Common myeloid progenitor, CD34-positive (primary cell): ENCODE measurements at regions of chr4 and their contacts with region 1.

Region 1: GRCh38 chr4:74228691-74229640 is 71.0 kb downstream of the MTHFD2L start:
- DNase-seq: peak; percentile 87 to 91 (median 88)
- H3K4me3 ChIP-seq: no peak overlapping the region
- H3K27ac ChIP-seq: no peak overlapping the region
- H3K4me1 ChIP-seq: peaks cover 0 to 22% (median 15%) of the 10 kb centered on the region in 4 experiments
- H3K27me3 ChIP-seq: no peaks in the 10 kb centered on the region

Region 2: DNA sequence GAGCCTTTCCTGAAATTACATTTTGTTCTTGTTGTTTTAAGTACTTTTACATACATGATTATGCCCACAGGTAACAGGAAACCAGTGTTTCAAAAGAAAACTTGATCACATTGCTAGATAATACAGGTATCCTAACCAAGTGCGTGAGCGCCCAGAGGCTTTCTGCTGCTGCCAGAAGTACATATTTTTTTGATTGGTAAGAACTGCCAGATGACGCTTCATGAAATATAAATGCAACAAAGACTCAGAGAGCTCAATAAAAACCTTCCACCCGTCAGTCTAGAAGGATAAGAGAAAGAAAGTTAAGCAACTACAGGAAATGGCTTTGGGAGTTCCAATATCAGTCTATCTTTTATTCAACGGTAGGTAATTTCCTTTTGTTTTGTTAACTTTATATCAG is 79.2 kb after region 1 on chr4 and contains the start of gene EPGN:
- CTCF ChIA-PET with region 1: interaction called, 18 read pairs
- POLR2A ChIA-PET with region 1: interaction called, 4 read pairs
- DNase-seq: no peak
- H3K4me3 ChIP-seq: peak within 1 kb of the TSS in 2 of 7 experiments; percentile 7 to 28
- H3K27ac ChIP-seq: peak within 1 kb of the TSS in 1 of 2 experiments; percentile 1
- H3K4me1 ChIP-seq: peaks cover 1 to 40% (median 9%) of the 10 kb centered on the region in 4 experiments
- H3K27me3 ChIP-seq: no peaks in the 10 kb centered on the region